KBM-7 (cell line): ENCODE measurements at regions of chr1 and their contacts with region 1.

Region 1: GRCh38 chr1:46036894-46037839 is 95.3 kb downstream of the PIK3R3 start:
- DNase-seq: peak; percentile 90

Region 2: GRCh38 chr1:46179138-46180081 is 142.2 kb after region 1 on chr1:
- in situ Hi-C with region 1: loop called (anchors 10 kb)
- DNase-seq: peak; percentile 81